Prostate gland (tissue), 2 donors: ENCODE measurements at regions of chr6 and their contacts with region 1.

Region 1: DNA sequence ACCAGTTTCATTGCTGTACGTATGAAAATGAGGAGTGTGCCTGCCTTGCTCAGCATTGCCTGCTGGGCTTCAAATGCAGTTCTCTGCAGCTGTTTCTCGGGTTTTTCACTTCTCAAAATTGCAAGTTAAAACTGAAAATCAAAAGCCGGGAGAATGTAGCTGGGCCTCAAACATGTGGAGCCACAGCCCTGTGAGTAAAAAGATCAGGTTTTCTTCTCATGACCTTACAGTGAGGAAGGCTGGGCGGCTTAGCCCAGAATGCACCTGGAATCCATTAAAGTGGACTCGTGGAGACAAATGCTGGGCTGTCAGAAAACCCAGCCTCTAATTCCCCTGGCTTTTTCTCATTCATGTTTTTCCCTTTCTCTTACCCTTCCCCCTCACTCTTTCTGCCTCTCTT is 34.4 kb downstream of the DSE start:
- DNase-seq: no peak
- H3K4me3 ChIP-seq: no peak overlapping the region
- H3K27ac ChIP-seq: no peak overlapping the region
- H3K4me1 ChIP-seq: no peaks in the 10 kb centered on the region
- H3K27me3 ChIP-seq: no peaks in the 10 kb centered on the region
- CTCF ChIP-seq: no peak
- POLR2A ChIP-seq: no peak

Region 2: GRCh38 chr6:116298973-116299372 is 106.2 kb before region 1 on chr6:
- intact Hi-C with region 1: no loop called
- DNase-seq: no peak
- H3K4me3 ChIP-seq: no peak overlapping the region
- H3K27ac ChIP-seq: no peak overlapping the region
- H3K4me1 ChIP-seq: no peaks in the 10 kb centered on the region
- H3K27me3 ChIP-seq: no peaks in the 10 kb centered on the region
- CTCF ChIP-seq: no peak
- POLR2A ChIP-seq: no peak

Region 3: GRCh38 chr6:116371120-116371917 is 33.8 kb before region 1 on chr6:
- intact Hi-C with region 1: loop called (anchors 2 kb)
- DNase-seq: peak; percentile 65
- H3K4me3 ChIP-seq: peak overlapping the region; percentile 61 to 70
- H3K27ac ChIP-seq: peak overlapping the region; percentile 89 to 93
- H3K4me1 ChIP-seq: no peaks in the 10 kb centered on the region
- H3K27me3 ChIP-seq: no peaks in the 10 kb centered on the region
- CTCF ChIP-seq: no peak
- POLR2A ChIP-seq: peak; percentile 38

Region 4: GRCh38 chr6:116439522-116440051 is 34.4 kb after region 1 on chr6:
- intact Hi-C with region 1: no loop called
- DNase-seq: no peak
- H3K4me3 ChIP-seq: no peak overlapping the region
- H3K27ac ChIP-seq: no peak overlapping the region
- H3K4me1 ChIP-seq: no peaks in the 10 kb centered on the region
- H3K27me3 ChIP-seq: no peaks in the 10 kb centered on the region
- CTCF ChIP-seq: no peak
- POLR2A ChIP-seq: no peak

Region 5: DNA sequence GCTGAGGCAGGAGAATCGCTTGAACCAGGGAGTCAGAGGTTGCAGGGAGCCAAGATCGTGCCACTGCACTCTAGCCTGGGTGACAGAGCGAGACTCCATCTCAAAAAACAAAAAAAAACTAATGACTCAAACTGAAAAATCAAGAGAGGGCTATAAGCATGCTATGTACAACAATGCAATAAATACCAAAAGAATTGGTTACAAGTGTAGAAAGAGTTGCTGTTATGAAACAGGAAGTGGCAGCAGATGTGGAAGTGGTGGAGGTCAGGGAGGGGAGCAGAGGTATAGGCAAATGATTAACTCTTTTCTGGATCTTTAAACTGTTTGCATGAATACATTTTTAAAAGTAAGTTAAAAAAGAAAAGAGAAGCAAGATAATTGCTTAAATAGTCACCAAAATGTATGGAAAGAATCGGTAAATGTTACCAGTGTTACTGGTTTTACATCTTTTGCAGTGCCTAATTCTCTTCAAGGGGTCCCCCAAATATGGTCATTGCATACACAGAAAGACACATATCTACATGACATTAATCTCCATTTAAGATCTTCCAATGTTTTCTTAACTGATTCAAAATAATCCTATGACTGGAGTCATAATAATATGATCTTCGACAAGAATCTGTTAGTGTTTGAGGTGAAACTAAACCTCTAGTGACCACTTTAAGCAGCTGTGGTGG is 71.0 kb after region 1 on chr6:
- intact Hi-C with region 1: no loop called
- DNase-seq: no peak
- H3K4me3 ChIP-seq: no peak overlapping the region
- H3K27ac ChIP-seq: no peak overlapping the region
- H3K4me1 ChIP-seq: no peaks in the 10 kb centered on the region
- H3K27me3 ChIP-seq: no peaks in the 10 kb centered on the region
- CTCF ChIP-seq: no peak
- POLR2A ChIP-seq: no peak